Activated CD4-positive, alpha-beta T cell treated with anti-CD3 and anti-CD28 coated beads, Interleukin-2, amount 10 ng/mL, durations not matched to agents 24 days and 14 days (primary cell): ENCODE measurements at regions of chr9 and their contacts with region 1.

Region 1: DNA sequence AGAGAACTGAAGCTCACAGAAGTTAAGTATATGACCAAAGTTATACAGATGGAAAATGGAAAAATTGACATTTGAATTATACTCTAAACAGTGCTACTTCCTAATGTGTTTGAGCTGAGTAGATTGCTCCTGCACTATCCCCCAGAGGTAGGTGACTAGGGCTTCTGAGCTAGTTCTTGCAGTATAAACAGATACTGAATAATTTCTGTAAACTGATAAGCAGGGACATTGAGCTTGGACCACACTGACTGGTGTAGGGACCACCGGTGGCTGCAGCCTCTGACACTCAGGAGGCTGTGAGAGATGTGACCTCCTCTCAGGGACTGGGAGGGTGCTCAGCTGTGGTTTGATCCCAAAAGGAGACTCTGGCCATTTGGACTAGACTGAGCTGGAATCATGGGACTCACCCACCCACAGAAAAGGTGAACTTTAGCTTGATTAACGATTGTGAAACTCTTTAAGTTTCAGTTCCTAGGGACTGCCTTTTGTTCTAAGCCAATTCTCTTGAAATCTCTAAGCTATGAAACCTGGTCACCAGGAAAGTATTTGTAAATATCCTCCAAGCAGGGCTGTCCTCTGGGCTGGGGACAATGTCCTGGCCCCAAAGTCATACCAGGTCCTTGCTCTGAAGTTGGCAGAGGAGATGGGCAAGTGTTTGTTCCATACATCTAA is 291.5 kb downstream of the SEC61B start:
- DNase-seq: peak; percentile 41
- H3K4me3 Mint-ChIP-seq: no peak overlapping the region
- H3K27ac Mint-ChIP-seq: no peak overlapping the region
- H3K4me1 Mint-ChIP-seq: peaks cover 9% of the 10 kb centered on the region
- H3K27me3 Mint-ChIP-seq: peaks cover 4% of the 10 kb centered on the region

Region 2: DNA sequence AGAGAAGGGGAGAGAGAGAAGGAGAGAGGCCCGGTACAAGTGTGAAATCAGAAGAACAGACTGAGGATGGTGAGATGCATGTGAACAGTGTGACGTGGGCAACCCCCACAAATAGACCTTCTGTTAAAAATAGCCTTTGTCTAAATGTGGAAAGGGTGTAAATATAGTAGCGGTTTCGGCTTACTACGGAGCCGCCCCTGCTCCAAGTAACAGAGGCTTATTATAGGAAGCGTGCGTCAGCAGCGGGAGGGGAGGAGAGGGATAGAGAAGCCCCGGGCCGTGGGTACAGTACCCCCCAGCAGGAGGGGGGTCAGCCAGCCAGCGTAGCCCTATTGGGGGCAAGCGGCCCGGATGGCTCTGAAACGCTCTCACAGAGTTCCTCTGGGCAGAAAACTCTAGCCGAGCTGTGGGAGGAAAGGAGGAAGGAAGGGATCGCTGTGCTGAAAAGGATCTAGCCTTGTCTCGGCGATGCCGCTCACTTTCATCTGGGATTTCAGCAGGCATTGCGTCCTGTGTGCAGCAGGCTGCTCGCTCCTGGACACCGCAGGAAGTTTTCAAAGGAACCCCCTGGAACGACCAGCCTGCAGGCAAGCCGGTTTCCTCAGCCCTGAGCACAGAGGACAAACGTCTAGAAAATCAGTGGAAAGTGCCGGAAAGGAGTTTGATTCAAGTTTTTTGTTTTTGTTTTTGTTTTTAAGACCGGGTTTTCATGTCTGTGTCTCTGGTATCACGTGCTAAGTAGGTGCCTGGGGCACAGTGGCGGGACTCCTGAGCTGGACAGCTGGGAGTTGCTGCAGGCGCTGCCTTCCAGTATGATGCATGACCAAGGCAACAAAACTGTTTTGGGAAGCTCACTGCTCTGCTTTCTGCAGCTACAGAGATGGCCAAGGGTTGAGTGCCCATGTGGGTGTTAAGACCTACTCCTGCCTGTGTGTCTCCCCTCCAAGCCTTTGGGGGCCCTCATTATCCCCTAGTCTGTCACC is 144.9 kb before region 1 on chr9:
- intact Hi-C with region 1: loop called (anchors 10 kb)
- DNase-seq: peak; percentile 58
- H3K4me3 Mint-ChIP-seq: peak overlapping the region; percentile 73
- H3K27ac Mint-ChIP-seq: peak overlapping the region; percentile 2
- H3K4me1 Mint-ChIP-seq: peaks cover 34% of the 10 kb centered on the region
- H3K27me3 Mint-ChIP-seq: peaks cover 20% of the 10 kb centered on the region